Heart right ventricle (tissue), 16 donors: ENCODE measurements at regions of chr1 and their contacts with region 1.

Region 1: DNA sequence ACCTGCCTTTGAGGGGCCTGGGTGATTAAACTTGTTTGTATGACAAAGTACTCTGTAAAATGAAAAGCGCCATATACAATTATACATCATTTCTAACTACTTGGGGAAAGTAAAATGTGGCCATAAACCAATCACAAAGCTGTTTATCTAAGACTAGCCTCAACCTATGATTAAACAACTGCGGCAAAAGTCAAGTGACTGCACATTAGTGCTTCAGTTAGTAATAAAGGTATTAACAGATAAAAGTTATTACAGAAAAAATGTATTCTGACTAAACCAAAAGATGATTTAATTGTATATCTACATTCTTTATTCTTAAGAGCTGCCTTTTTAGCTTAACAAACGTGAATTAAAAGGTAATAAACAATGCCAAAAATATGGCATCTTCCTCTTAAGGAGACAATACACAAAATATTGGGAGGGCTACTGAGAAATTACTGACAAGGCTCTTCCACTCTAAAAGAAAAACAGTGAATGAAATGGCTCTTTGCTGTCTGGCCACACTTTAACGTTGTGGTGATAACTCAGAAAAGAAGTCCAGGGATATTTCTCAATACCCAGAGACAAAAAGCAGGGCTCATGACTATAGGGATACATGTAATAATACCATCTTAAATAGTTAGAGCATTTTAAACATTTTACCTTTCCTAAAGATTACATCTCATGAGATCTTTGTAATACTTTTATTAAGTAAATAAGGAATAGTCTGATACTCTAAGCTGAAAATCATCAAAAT is 8.6 kb downstream of the ARHGAP29 start:
- DNase-seq: no peak
- ATAC-seq: peak in 1 of 8 donors; percentile 62
- H3K4me3 ChIP-seq: no peak overlapping the region
- H3K27ac ChIP-seq: peak overlapping the region in 6 of 10 donors; percentile 0 to 97 (median 34)
- H3K4me1 ChIP-seq: peaks cover 0 to 100% (median 81%) of the 10 kb centered on the region in 9 donors
- H3K27me3 ChIP-seq: peaks cover 0 to 34% (median 0%) of the 10 kb centered on the region in 7 donors
- CTCF ChIP-seq: no peak

Region 2: DNA sequence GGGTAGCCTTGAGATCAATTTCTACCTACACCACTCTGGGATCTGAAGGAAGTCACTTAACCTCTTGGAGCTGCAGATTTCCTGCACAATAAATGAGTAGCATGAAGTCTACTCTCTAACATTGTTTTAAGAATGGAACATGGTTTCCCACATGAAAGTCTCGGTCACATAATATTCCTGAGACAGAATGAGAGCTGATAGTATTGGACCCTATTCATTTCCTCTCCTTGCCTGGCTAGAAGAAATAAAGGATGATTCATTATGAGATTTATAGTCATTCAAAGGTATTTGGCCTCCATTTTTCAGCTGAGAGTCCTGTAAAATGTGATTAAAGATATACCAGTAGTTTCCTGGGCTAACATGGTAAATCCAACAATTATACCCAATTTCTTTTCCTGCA is 48.2 kb before region 1 on chr1:
- intact Hi-C with region 1: loop called in 1 of 10 experiments (anchors 5 kb)
- DNase-seq: no peak
- ATAC-seq: no peak
- H3K4me3 ChIP-seq: no peak overlapping the region
- H3K27ac ChIP-seq: peak overlapping the region in 2 of 10 donors; percentile 38 to 68
- H3K4me1 ChIP-seq: peaks cover 0 to 43% (median 28%) of the 10 kb centered on the region in 9 donors
- H3K27me3 ChIP-seq: no peaks in the 10 kb centered on the region
- CTCF ChIP-seq: no peak

Region 3: GRCh38 chr1:94191216-94191615 is 37.6 kb before region 1 on chr1:
- intact Hi-C with region 1: loop called in 1 of 10 experiments (anchors 5 kb)
- DNase-seq: no peak
- ATAC-seq: no peak
- H3K4me3 ChIP-seq: no peak overlapping the region
- H3K27ac ChIP-seq: peak overlapping the region in 2 of 10 donors; percentile 0 to 66
- H3K4me1 ChIP-seq: peaks cover 6 to 74% (median 51%) of the 10 kb centered on the region in 9 donors
- H3K27me3 ChIP-seq: no peaks in the 10 kb centered on the region
- CTCF ChIP-seq: no peak

Region 4: GRCh38 chr1:94425821-94426484 is 197.1 kb after region 1 on chr1:
- intact Hi-C with region 1: no loop called
- DNase-seq: no peak
- ATAC-seq: no peak
- H3K4me3 ChIP-seq: peak overlapping the region in 1 of 10 donors; percentile 19
- H3K27ac ChIP-seq: peak overlapping the region in 3 of 10 donors; percentile 12 to 34 (median 25)
- H3K4me1 ChIP-seq: peaks cover 3 to 83% (median 51%) of the 10 kb centered on the region in 9 donors
- H3K27me3 ChIP-seq: no peaks in the 10 kb centered on the region
- CTCF ChIP-seq: no peak